ENCODE measurements at regions of chr1 and their contacts with region 1.

Region 1: DNA sequence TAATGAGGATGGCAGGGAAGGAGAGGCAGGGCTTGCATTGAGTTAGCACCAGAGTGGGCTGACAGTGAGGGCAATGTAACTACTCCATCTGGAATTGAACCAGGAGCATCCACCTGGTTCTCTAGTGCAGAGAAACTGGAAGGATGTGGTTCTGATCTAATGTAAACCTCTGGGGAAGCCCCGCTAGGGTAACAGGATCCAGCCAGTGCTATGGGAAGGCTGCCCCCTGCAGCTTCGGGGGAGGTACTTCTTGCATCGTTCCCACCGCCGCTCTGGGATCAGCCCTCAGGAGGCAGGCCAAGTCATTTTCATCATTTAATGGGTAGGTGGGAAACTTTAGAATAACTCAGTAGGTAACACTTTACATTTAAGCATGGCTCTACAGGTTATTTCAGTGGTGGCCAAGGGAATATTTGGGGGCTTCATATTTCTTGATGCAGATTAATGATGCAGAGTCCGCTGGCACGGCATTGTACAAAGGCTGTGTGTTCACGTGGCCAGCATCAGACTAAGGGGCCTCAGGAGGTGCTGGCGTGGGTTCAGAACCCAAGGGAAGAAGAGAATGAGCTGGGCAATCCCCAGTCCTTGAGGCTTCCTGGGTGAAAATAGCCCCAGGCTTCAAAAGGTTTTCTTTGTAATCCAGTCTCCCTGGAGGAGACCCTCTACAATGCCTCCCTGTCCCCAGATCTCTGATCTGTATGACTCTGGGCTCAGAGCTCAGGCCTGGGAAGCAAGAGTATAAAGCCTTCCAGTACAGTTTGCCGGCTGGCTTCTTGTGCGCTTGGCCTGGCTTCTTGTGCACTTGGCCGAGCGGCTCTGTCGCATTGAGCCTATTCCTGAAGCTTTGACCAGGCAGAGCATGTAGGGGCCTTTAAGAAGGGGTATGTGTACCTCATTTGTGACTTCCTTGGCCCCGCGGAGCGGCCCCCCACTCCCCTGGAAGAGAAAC is 26.4 kb upstream of the KAZN start:
- DNase-seq: peak; percentile 55
- CTCF ChIP-seq: peak; percentile 18

Region 2: GRCh38 chr1:14113841-14114567 is 458.1 kb before region 1 on chr1:
- in situ Hi-C with region 1: loop called (anchors 25 kb)
- DNase-seq: peak; percentile 28
- CTCF ChIP-seq: peak; percentile 35